WTC11 (cell line): ENCODE measurements at regions of chr6 and their contacts with region 1.

Region 1: GRCh38 chr6:158220786-158221442 is 52.8 kb downstream of the GTF2H5 start:
- DNase-seq: peak; percentile 86
- ATAC-seq: peak; percentile 100
- H3K4me3 Mint-ChIP-seq: no peak overlapping the region
- H3K27ac Mint-ChIP-seq: no peak overlapping the region
- H3K4me1 Mint-ChIP-seq: no peaks in the 10 kb centered on the region
- H3K27me3 Mint-ChIP-seq: 0 out of 2 replicates have a peak, but pooled peaks cover 5% of the 10 kb centered on the region
- CTCF ChIP-seq: peak; percentile 93

Region 2: DNA sequence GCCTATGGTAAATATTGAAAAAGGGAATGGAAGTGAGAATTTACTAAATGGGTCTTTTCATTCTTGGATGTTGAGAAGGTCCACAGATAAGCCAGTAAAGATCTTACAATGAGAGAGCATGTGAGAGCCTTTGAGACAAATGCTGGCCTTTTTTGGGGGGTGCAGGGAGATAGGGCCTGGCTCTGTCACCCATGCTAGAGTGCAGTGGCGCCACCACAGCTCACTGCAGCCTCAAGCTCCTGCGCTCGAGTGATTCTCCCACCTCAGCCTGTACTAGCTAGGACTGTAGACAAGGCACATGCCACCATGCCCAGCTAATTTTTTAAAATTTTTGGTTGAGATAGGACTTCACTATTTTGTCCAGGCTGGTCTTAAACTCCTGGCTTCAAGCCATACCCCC is 275.8 kb after region 1 on chr6:
- CTCF ChIA-PET with region 1: interaction called, 13 read pairs
- POLR2A ChIA-PET with region 1: no interaction called
- DNase-seq: no peak
- ATAC-seq: peak; percentile 90
- H3K4me3 Mint-ChIP-seq: no peak overlapping the region
- H3K27ac Mint-ChIP-seq: no peak overlapping the region
- H3K4me1 Mint-ChIP-seq: no peaks in the 10 kb centered on the region
- H3K27me3 Mint-ChIP-seq: no peaks in the 10 kb centered on the region
- CTCF ChIP-seq: no peak

Region 3: DNA sequence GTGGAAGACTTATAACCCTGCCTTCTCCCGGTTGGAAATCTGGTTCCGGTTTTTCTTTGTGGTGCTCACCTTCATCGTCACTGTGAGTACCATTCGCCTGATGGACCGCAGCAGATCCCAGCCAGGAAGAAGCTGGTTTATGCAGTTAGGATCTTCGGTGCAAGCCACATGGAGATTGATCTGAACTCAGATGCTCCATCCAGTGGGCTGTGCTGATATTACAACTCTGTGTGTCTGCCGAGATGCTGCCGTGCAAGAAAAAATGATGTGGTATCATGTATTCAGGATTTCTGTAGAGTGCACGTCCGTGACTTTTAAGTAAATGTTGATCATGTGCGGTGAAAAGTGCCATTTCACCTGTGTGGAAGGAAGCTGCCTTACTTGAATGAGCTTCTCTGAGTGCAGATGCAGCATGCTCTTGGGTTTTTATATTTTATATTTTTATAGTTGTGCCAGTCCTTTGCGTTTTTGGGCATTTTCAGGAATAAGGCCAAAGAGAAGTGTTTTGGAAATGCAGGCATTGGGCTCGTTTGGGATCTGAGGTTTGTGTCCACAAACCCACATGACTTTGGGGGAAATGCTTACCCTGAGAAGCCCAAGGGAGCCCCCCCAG is 384.5 kb after region 1 on chr6:
- CTCF ChIA-PET with region 1: interaction called, 11 read pairs
- POLR2A ChIA-PET with region 1: no interaction called
- DNase-seq: peak; percentile 82
- ATAC-seq: peak; percentile 97
- H3K4me3 Mint-ChIP-seq: no peak overlapping the region
- H3K27ac Mint-ChIP-seq: peak overlapping the region; percentile 32; the same call in 1 of the 2 replicates
- H3K4me1 Mint-ChIP-seq: no peaks in the 10 kb centered on the region
- H3K27me3 Mint-ChIP-seq: no peaks in the 10 kb centered on the region
- CTCF ChIP-seq: peak; percentile 63